ENCODE measurements at regions of chr1 and their contacts with region 1.

Region 1: GRCh38 chr1:173867753-173868265 is at the start of gene GAS5:
- DNase-seq: peak; percentile 98 to 99 (median 98)
- H3K4me3 ChIP-seq: peak within 1 kb of the TSS; percentile 88
- H3K4me3 Mint-ChIP-seq: peak within 1 kb of the TSS; percentile 88 to 97 (median 95)
- H3K27ac ChIP-seq: peak within 1 kb of the TSS; percentile 91
- H3K27ac Mint-ChIP-seq: peak within 1 kb of the TSS; percentile 90 to 99 (median 96)
- H3K4me1 ChIP-seq: peaks cover 63% of the 10 kb centered on the region
- H3K4me1 Mint-ChIP-seq: peaks cover 70 to 85% (median 84%) of the 10 kb centered on the region in 3 donors
- H3K27me3 ChIP-seq: no peaks in the 10 kb centered on the region
- H3K27me3 Mint-ChIP-seq: peaks cover 0 to 2% of the 10 kb centered on the region in 2 donors
- total RNA-seq, gene GAS5: 1,056 to 1,102 TPM

Region 2: GRCh38 chr1:173476664-173477285 is 391.0 kb before region 1 on chr1:
- CTCF ChIA-PET with region 1: no interaction called
- POLR2A ChIA-PET with region 1: interaction called, 15 read pairs
- DNase-seq: peak; percentile 78 to 89 (median 80)
- H3K4me3 ChIP-seq: peak overlapping the region; percentile 93
- H3K4me3 Mint-ChIP-seq: peak overlapping the region; percentile 88 to 97 (median 93)
- H3K27ac ChIP-seq: peak overlapping the region; percentile 93
- H3K27ac Mint-ChIP-seq: peak overlapping the region; percentile 92 to 97 (median 94)
- H3K4me1 ChIP-seq: peaks cover 40% of the 10 kb centered on the region
- H3K4me1 Mint-ChIP-seq: peaks cover 58 to 79% (median 76%) of the 10 kb centered on the region in 3 donors
- H3K27me3 ChIP-seq: no peaks in the 10 kb centered on the region
- H3K27me3 Mint-ChIP-seq: no peaks in the 10 kb centered on the region

Region 3: DNA sequence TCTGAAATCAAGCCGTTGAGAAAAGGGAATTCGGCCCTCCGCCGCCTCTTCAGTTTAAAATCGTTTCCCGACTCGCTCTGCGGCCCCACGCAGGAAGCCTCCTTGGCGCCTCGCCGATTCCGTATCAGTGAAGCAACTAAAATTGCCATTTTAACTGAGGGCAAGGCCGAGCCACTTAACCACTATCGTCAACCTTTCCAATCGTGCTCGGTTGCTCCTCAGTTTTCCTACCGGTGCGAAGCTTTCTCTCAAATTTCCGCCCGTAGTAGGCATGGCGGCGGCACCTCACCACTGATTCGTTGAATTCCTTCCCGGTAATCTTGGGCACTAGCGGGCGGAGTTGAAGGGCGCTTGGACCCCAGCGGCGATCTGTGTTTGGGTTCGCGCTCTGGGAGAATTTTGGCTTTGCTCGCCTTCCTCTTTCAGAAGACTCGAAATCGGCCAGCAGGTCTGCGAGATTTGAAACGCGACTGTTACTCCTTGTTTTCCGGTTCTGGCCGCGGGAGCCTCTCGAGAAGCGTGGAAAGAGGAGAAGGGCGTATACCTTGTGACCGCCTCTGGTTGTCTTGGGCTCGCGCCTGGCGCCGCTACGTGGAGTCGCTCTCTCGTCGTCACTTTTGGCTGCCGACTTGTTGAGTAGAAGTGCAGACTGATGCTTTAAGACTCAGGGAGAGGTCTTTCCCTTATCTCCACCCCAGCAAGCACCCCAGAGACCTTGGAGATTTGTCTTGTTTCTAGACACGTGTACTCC is 43.3 kb before region 1 on chr1 and contains the starts of genes CENPL and DARS2:
- CTCF ChIA-PET with region 1: interaction called, 3 read pairs
- POLR2A ChIA-PET with region 1: interaction called, 15 read pairs
- DNase-seq: peak; percentile 79 to 93 (median 91)
- H3K4me3 ChIP-seq: peak within 1 kb of the TSS; percentile 95
- H3K4me3 Mint-ChIP-seq: peak within 1 kb of the TSS; percentile 89 to 99 (median 92)
- H3K27ac ChIP-seq: peak within 1 kb of the TSS; percentile 93
- H3K27ac Mint-ChIP-seq: peak within 1 kb of the TSS; percentile 89 to 99 (median 94)
- H3K4me1 ChIP-seq: peaks cover 18% of the 10 kb centered on the region
- H3K4me1 Mint-ChIP-seq: peaks cover 38 to 71% (median 57%) of the 10 kb centered on the region in 3 donors
- H3K27me3 ChIP-seq: no peaks in the 10 kb centered on the region
- H3K27me3 Mint-ChIP-seq: no peaks in the 10 kb centered on the region
- total RNA-seq, gene CENPL: 24.9 to 27.4 TPM
- total RNA-seq, gene DARS2: 39.4 to 42.5 TPM

Region 4: GRCh38 chr1:174022080-174022975 is 154.5 kb after region 1 on chr1 and contains the start of gene RC3H1:
- CTCF ChIA-PET with region 1: no interaction called
- POLR2A ChIA-PET with region 1: interaction called, 17 read pairs
- DNase-seq: peak; percentile 83 to 92 (median 84)
- H3K4me3 ChIP-seq: peak within 1 kb of the TSS; percentile 96
- H3K4me3 Mint-ChIP-seq: peak within 1 kb of the TSS; percentile 93 to 100 (median 97)
- H3K27ac ChIP-seq: peak within 1 kb of the TSS; percentile 97
- H3K27ac Mint-ChIP-seq: peak within 1 kb of the TSS; percentile 90 to 100 (median 98)
- H3K4me1 ChIP-seq: peaks cover 45% of the 10 kb centered on the region
- H3K4me1 Mint-ChIP-seq: peaks cover 45 to 54% (median 51%) of the 10 kb centered on the region in 3 donors
- H3K27me3 ChIP-seq: no peaks in the 10 kb centered on the region
- H3K27me3 Mint-ChIP-seq: no peaks in the 10 kb centered on the region
- total RNA-seq, gene RC3H1: 39.7 to 40.5 TPM